Activated T-helper 1 cell treated with anti-CD3 and anti-CD28 coated beads, Interleukin-12 subunit alpha, Interleukin-12 subunit beta, Interleukin-2, Interleukin-4 antibody, amounts not matched to agents 30 ng/mL and 10 ng/mL and 1 ng/mL, durations not matched to agents 14 hours and 24 hours and 36 hours (primary cell): ENCODE measurements at regions of chr13 and their contacts with region 1.

Region 1: DNA sequence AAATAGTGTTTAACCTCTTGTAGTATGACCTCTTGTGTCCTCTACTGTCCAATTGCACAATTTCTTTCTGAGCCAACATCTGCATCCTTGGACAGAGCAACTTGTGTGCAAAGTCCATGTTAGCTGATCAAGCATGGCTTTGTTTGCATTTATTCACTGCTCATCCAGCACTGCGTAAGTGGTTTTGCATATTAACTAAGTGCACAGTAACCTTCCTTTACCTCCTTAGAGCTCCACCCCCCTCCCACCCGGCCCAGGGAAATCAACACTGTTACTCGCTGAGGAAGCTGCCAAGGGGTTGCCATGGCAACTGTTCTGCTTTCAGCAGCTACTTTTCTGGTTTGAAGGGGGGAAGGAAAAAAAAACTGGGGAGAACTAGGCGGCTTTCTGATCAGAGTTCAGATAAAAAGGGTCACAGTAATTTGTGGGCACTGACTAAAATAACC is 153.5 kb upstream of the KLF12 start:
- DNase-seq: peak; percentile 60
- H3K4me3 Mint-ChIP-seq: peak overlapping the region; percentile 52
- H3K27ac Mint-ChIP-seq: peak overlapping the region; percentile 79
- H3K4me1 Mint-ChIP-seq: peaks cover 39% of the 10 kb centered on the region
- H3K27me3 Mint-ChIP-seq: no peaks in the 10 kb centered on the region

Region 2: GRCh38 chr13:73058736-73059459 is 1228.8 kb before region 1 on chr13 and contains the start of gene KLF5:
- intact Hi-C with region 1: loop called (anchors 5 kb)
- DNase-seq: peak; percentile 97
- H3K4me3 Mint-ChIP-seq: peak within 1 kb of the TSS; percentile 82
- H3K27ac Mint-ChIP-seq: peak within 1 kb of the TSS; percentile 74
- H3K4me1 Mint-ChIP-seq: peaks cover 20% of the 10 kb centered on the region
- H3K27me3 Mint-ChIP-seq: peaks cover 51% of the 10 kb centered on the region
- total RNA-seq, gene KLF5: 2.4 and 2.5 TPM in 2 replicates

Region 3: GRCh38 chr13:73765651-73766384 is 521.9 kb before region 1 on chr13:
- intact Hi-C with region 1: loop called (anchors 5 kb)
- DNase-seq: peak; percentile 43
- H3K4me3 Mint-ChIP-seq: peak overlapping the region; percentile 69
- H3K27ac Mint-ChIP-seq: peak overlapping the region; percentile 83
- H3K4me1 Mint-ChIP-seq: peaks cover 46% of the 10 kb centered on the region
- H3K27me3 Mint-ChIP-seq: no peaks in the 10 kb centered on the region

Region 4: GRCh38 chr13:73943137-73943964 is 344.4 kb before region 1 on chr13:
- intact Hi-C with region 1: loop called (anchors 5 kb)
- DNase-seq: no peak
- H3K4me3 Mint-ChIP-seq: no peak overlapping the region
- H3K27ac Mint-ChIP-seq: no peak overlapping the region
- H3K4me1 Mint-ChIP-seq: peaks cover 41% of the 10 kb centered on the region
- H3K27me3 Mint-ChIP-seq: no peaks in the 10 kb centered on the region

Region 5: DNA sequence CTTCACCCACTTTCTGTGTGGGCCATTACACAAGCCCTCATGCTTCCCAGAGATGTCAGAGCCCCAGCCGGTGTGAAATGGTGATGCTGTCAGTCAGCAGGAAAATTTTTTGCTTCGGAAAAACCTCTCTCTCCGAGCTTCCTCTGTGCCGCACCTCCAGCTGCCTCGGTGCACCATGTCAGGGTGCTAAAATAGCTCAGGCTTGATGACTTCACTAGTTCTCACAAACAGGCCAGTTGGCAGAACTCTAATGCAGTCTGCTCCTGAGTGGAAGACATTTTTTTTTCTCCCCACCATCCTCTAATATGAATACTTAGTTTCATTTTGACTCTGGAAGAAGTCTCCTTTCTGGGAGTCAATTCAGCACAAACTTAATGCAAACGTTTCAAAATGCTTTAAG is 224.8 kb before region 1 on chr13:
- intact Hi-C with region 1: loop called (anchors 2 kb)
- DNase-seq: no peak
- H3K4me3 Mint-ChIP-seq: peak overlapping the region; percentile 83
- H3K27ac Mint-ChIP-seq: peak overlapping the region; percentile 92
- H3K4me1 Mint-ChIP-seq: peaks cover 60% of the 10 kb centered on the region
- H3K27me3 Mint-ChIP-seq: no peaks in the 10 kb centered on the region

Region 6: GRCh38 chr13:74883834-74884233 is 596.1 kb after region 1 on chr13:
- intact Hi-C with region 1: no loop called
- DNase-seq: no peak
- H3K4me3 Mint-ChIP-seq: no peak overlapping the region
- H3K27ac Mint-ChIP-seq: no peak overlapping the region
- H3K4me1 Mint-ChIP-seq: no peaks in the 10 kb centered on the region
- H3K27me3 Mint-ChIP-seq: no peaks in the 10 kb centered on the region

Region 7: GRCh38 chr13:75319254-75319653 is 1031.5 kb after region 1 on chr13:
- intact Hi-C with region 1: loop called (anchors 1 kb)
- DNase-seq: no peak
- H3K4me3 Mint-ChIP-seq: peak overlapping the region; percentile 9
- H3K27ac Mint-ChIP-seq: peak overlapping the region; percentile 99
- H3K4me1 Mint-ChIP-seq: peaks cover 68% of the 10 kb centered on the region
- H3K27me3 Mint-ChIP-seq: no peaks in the 10 kb centered on the region